ENCODE measurements at regions of chr3 and their contacts with region 1.

Region 1: DNA sequence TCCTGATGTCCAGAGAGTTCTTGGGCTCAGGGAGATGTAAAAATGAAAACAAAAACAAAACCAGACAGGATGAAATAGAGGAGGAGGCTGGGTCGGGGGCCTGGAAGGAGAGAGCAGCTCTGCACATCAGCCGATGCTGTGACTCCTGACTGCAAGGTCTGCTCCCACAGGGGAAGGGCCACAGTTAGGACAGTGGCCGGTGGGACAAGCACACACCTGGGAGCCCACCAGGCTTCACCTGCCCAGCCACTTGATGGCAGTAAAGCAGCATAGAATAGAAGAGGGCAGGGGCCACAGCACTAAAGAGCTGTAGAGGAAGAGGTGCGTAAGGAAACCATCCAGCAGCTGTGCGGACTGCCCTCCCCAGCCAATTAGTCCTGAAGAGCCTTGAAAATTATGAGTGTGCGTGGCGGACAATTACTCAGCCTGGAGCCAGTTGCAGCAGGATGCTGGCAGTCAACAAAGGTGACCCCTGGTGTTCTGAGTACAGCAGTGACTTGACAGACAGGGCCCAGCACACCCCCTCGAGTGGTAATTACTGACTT is 29.8 kb downstream of the ALS2CL start:
- DNase-seq: no peak
- ATAC-seq: peak; percentile 56
- H3K4me3 ChIP-seq: no peak overlapping the region
- H3K27ac ChIP-seq: no peak overlapping the region
- H3K4me1 ChIP-seq: no peaks in the 10 kb centered on the region
- H3K27me3 ChIP-seq: peaks cover 3 to 34% of the 10 kb centered on the region in 2 experiments; a peak in 2 of 5 replicates
- CTCF ChIP-seq: peak; percentile 27; the same call in 1 of the 2 replicates
- EP300 ChIP-seq: no peak
- POLR2A ChIP-seq: no peak
- RAD21 ChIP-seq: no peak

Region 2: GRCh38 chr3:46488735-46489361 is 174.8 kb before region 1 on chr3:
- CTCF ChIA-PET with region 1: interaction called, 3 read pairs
- POLR2A ChIA-PET with region 1: no interaction called
- in situ Hi-C with region 1: loop called (anchors 10 kb)
- intact Hi-C with region 1: no loop called
- DNase-seq: peak; percentile 76
- ATAC-seq: peak; percentile 97
- H3K4me3 ChIP-seq: peak overlapping the region in 1 of 3 experiments; percentile 7; a peak in 1 of 6 replicates
- H3K27ac ChIP-seq: no peak overlapping the region
- H3K4me1 ChIP-seq: peaks cover 14% of the 10 kb centered on the region
- H3K27me3 ChIP-seq: no peaks in the 10 kb centered on the region; a peak in 1 of 5 replicates
- CTCF ChIP-seq: peak; percentile 99
- EP300 ChIP-seq: no peak
- POLR2A ChIP-seq: no peak
- RAD21 ChIP-seq: peak; percentile 97

Measured in HepG2 (cell line).